ENCODE measurements at regions of chr7 and their contacts with region 1.

Region 1: DNA sequence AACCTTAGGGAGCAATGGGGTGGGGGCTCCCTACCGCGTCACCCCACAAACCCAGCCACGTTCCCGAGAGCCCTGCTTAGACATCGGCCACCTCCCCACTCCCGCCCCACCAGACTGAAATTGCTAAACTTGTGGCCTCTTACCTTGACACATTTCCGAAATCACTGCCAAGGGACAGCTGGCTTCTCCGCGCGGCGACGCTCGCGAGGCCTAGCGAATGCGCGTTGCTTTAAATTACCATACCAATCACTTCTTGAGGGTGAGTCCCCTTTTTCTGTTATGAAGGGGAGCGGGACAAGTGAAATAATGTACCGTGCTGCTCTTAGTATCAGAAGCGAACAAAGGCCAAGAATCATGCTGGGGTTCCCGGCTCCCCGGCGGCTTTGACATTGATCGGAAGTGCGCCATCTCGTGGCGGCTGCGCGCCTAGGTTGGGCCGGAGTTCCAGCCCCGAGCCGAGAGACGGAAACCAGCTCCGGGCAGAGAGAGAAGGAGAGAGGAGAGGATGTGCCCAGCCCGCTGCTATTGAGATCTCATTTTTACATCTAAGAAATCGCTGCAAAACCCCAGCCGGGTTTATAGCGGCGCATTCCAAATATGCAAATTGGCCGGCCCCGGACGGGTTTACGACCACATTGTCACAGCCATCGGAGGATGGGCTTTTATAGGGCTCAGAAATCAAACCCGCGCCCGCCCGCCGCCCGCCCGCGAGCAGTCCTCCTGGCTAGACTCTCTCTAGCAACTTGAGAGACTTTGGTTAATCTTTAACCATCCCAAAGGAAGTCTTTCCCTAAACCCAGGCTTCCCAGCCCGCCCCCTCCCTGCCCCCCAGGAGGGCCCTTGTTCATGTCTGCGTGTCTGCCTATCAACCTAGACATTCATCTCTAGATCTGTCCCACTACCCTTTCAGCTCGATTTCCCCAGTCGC is 5.3 kb downstream of the HOXA11 start:
- DNase-seq: no peak
- H3K4me3 ChIP-seq: peak overlapping the region; percentile 75
- CTCF ChIP-seq: peak; percentile 97

Region 2: GRCh38 chr7:27139334-27140125 is 40.2 kb before region 1 on chr7:
- CTCF ChIA-PET with region 1: no interaction called
- POLR2A ChIA-PET with region 1: no interaction called
- DNase-seq: no peak
- H3K4me3 ChIP-seq: no peak overlapping the region
- CTCF ChIP-seq: no peak

Region 3: DNA sequence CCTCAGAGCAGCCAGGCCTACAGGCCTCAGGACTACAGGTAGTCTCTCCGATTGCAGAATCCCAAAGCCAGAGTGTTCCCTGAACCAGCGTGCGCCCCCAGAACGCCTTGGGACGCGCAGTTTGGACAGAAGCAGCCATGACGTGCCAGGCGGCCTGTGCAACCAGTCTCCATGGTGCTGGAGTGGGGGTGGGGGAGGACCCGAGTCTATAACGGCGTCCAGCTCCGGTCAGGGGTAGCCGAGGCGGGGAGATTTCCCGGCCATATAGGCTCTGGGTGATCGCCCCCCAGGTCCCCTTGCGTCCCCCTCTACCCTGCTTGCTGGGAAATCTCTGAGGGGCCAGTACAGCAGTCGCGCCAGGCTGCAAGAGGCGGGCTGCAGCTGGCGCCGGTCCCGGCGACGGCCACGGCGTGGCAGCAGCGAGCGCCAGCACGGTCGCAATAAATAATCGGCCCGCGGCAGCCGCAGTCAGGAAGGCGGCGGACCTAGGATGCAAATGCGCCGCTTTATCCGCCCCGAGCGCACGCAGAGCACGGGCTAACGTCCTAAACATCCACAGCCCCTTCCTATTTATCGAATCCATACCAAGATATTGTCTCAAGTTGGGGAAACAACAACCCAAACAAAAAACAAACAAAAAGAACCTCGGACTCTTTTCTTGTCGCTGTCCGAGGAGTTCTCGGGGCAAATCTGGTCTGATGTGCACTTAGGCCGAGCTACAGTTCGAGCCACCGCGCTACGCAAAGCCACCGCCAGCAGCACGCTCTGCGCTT is 29.0 kb before region 1 on chr7:
- CTCF ChIA-PET with region 1: interaction called, 10 read pairs
- POLR2A ChIA-PET with region 1: no interaction called
- DNase-seq: no peak
- H3K4me3 ChIP-seq: peak overlapping the region; percentile 72
- CTCF ChIP-seq: peak; percentile 91

Region 4: DNA sequence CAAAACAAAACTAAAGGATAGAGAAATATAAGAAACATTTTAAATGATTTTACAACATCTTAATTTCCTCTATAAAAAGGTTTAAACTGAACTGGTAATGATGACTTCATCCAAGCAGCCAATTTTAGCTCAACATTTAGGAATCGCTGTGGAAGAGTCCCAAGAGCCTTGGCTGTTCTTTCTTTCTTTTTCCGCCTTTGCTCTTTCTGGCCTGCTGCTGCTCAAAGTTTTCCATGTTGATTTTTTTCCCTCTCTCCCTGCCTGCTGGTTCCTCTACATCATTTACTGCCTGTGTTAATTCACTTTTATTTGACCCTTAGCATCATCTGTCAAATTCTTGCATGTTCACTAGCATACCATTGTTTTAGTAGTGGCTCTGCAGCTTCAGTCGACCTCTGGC is 209.7 kb after region 1 on chr7:
- CTCF ChIA-PET with region 1: no interaction called
- POLR2A ChIA-PET with region 1: no interaction called
- DNase-seq: no peak
- H3K4me3 ChIP-seq: no peak overlapping the region
- CTCF ChIP-seq: no peak

Measured in AG04449 (cell line).